Right cardiac atrium (tissue), 5 donors: ENCODE measurements at regions of chr1 and their contacts with region 1.

Region 1: GRCh38 chr1:1779706-1780597 is 1.7 kb upstream of the NADK start:
- DNase-seq: peak; percentile 51 to 79 (median 75)
- ATAC-seq: peak in 1 of 2 donors; percentile 0
- H3K4me3 ChIP-seq: no peak overlapping the region
- H3K27ac ChIP-seq: peak overlapping the region; percentile 45
- H3K4me1 ChIP-seq: peaks cover 28% of the 10 kb centered on the region
- H3K27me3 ChIP-seq: no peaks in the 10 kb centered on the region

Region 2: DNA sequence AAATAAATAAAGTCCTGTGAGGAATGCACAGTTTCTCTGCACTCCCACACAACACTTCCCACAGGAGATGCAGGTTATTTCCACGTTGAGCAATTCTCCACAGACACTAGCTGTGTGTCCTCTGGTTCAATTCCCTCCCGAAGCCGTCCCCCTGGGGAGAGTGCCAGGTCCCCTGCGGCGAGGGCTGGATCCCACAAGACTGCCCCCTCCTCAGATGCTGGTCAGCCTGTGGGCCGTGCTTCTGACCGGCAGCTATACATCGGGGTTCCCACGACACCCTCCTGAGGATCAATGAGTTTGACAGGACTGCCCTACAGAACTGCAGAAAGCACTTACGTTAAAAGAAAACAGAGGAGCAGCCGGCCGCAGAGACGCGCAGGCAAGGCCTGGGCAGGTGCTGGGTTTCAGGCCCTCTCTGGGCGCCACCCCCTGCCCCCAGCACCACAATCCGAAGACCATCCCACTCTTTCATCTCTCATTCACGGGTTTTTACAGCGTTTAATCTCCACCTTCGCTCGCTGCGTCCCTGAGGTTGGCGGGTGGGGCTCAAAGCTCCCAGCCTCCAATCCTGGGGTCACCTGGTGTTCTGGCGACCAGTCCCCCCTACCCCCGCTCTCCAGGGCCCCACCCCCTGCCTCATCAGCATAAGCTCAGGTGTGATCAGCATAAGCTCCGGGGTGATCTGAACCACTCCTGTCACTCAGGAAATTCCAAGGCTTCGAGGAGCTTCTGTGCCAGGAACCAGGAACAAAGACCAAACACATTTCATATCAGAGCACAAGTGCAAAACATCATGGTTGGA is 96.6 kb before region 1 on chr1:
- intact Hi-C with region 1: no loop called
- DNase-seq: peak in 2 of 3 donors; percentile 8 to 25
- ATAC-seq: no peak
- H3K4me3 ChIP-seq: no peak overlapping the region
- H3K27ac ChIP-seq: no peak overlapping the region
- H3K4me1 ChIP-seq: no peaks in the 10 kb centered on the region
- H3K27me3 ChIP-seq: no peaks in the 10 kb centered on the region

Region 3: GRCh38 chr1:1890506-1891348 is 110.8 kb after region 1 on chr1 and contains the start of gene GNB1:
- intact Hi-C with region 1: loop called in 1 of 4 experiments (anchors 10 kb)
- DNase-seq: peak; percentile 88 to 96 (median 96)
- ATAC-seq: peak; percentile 84 to 85
- H3K4me3 ChIP-seq: peak within 1 kb of the TSS; percentile 99
- H3K27ac ChIP-seq: peak within 1 kb of the TSS; percentile 94
- H3K4me1 ChIP-seq: peaks cover 22% of the 10 kb centered on the region
- H3K27me3 ChIP-seq: no peaks in the 10 kb centered on the region
- total RNA-seq, gene GNB1: 152 to 205 (median 174) TPM

Region 4: GRCh38 chr1:1906185-1907097 is 126.5 kb after region 1 on chr1:
- intact Hi-C with region 1: loop called in 3 of 4 experiments (anchors 5 to 10 kb)
- DNase-seq: peak; percentile 89 to 94 (median 94)
- ATAC-seq: peak; percentile 69 to 70
- H3K4me3 ChIP-seq: no peak overlapping the region
- H3K27ac ChIP-seq: peak overlapping the region; percentile 25
- H3K4me1 ChIP-seq: no peaks in the 10 kb centered on the region
- H3K27me3 ChIP-seq: no peaks in the 10 kb centered on the region

Region 5: DNA sequence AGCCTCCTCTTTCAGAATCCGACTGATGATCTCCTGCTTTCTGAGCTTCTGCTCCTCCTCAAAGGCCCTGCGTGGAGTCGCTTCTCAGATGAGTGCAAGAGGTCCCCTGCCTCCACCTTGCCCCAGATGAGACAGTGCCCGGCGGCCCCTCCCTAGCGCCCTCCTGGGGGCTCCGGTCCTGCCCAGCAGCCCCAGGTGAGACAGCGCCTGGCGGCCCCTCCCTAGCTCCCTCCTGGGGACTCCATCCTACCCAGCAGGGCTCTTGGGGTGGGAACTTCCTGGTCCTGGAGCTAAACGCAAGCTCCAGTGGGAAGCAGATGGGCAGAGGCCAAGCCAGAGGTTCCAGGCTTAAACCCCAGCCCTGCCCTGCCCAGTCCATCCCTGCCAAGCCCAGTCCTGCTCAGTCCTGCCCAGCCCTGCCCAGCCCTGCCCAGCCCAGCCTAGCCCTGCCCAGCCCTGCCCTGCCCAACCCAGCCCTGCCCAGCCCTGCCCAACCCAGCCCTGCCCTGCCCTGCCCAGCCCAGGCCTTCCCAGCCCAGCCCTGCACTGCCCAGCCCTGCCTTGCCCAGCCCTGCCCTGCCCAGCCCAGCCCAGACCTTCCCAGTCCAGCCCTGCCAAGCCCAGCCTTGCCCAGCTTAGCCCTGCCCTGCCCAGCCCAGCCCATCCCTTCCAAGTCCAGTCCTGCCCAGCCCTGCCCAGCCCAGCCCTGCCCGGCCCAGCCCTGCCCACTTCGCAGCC is 189.0 kb after region 1 on chr1:
- intact Hi-C with region 1: no loop called
- DNase-seq: peak in 1 of 3 donors; percentile 39
- ATAC-seq: peak in 1 of 2 donors; percentile 17
- H3K4me3 ChIP-seq: no peak overlapping the region
- H3K27ac ChIP-seq: no peak overlapping the region
- H3K4me1 ChIP-seq: no peaks in the 10 kb centered on the region
- H3K27me3 ChIP-seq: no peaks in the 10 kb centered on the region

Region 6: DNA sequence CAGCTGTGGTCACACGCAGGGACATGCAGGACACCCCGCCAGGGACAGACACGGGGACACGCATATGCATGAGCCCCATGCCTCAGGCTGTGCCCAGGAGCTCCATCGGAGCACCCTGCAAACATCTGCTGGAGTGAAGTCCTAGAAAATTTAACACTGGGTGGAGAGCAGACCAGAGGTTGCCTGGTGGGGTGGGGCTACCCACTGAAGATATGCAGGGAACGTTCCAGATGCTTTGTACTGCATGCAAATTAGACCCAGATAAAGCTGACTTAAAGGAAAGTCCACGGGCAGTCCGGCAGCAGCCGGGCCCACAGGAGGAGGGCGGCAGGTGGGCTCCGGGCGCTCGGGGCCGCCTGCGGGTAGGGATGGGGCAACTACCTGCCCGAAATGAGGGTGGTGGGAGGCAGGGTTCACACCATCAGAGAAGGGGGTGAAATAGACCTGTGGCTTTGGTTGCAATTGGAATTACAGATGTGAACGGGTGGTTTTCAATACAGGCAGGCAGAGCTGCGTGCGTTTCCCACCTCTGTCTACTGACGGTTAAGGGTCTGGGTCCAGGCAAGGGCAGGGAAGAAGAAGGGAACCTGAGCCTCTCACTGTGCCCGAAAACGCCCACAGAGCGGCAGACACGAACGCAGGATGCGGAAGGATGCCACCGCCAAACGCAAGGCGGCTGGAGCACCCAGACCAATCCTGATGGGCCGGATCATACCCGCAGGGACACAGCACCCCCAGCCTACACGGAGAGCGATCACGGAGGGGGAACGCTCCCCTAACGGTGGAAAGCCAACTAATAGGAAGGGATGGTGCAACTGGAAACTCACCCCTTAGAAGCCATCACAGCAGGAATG is 202.7 kb after region 1 on chr1:
- intact Hi-C with region 1: no loop called
- DNase-seq: peak in 2 of 3 donors; percentile 9 to 12
- ATAC-seq: no peak
- H3K4me3 ChIP-seq: no peak overlapping the region
- H3K27ac ChIP-seq: no peak overlapping the region
- H3K4me1 ChIP-seq: no peaks in the 10 kb centered on the region
- H3K27me3 ChIP-seq: no peaks in the 10 kb centered on the region